H1 (cell line): ENCODE measurements at regions of chr6 and their contacts with region 1.

Region 1: DNA sequence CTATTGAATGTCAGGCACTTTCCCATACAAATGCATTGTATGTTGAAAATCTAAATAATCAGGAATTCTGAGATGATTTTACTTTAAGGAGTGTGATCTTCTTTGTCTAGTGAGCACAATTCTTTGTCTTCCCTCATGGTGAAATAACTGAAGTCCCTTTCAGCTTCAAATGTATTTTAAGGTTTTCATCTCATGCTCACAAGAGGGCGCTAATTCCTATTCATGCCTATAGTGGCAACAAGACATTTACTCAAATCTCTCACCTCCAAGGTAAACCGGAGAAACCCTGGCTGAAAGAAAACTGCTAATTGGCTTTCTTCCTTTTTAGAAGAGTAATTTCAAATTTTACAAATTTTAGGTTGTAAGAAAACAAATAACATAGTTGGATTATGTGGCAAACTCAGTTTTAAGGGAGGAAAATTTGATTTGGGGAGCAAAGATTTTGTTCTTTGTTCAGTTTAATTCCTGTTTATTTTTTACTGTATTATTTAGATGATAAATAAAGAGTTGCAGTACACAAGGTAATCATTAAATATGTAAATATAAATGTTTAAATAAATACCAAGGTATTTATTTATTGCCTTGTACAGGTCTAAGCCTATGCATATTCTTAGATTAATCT is 69.1 kb downstream of the SLC35F1 start:
- DNase-seq: no peak
- H3K4me3 ChIP-seq: no peak overlapping the region
- H3K27ac ChIP-seq: no peak overlapping the region
- H3K4me1 ChIP-seq: 0 out of 7 replicates have a peak, but pooled peaks cover 0 to 3% (median 0%) of the 10 kb centered on the region in 4 experiments
- H3K27me3 ChIP-seq: no peaks in the 10 kb centered on the region
- CTCF ChIP-seq: peak in 2 of 3 experiments; percentile 62 to 76; a peak in 3 of 4 replicates
- EP300 ChIP-seq: no peak
- POLR2A ChIP-seq: no peak
- RAD21 ChIP-seq: peak; percentile 71 to 78

Region 2: GRCh38 chr6:117840541-117840983 is 135.6 kb before region 1 on chr6:
- CTCF ChIA-PET with region 1: interaction called, 11 read pairs
- POLR2A ChIA-PET with region 1: no interaction called
- DNase-seq: no peak
- H3K4me3 ChIP-seq: no peak overlapping the region
- H3K27ac ChIP-seq: no peak overlapping the region
- H3K4me1 ChIP-seq: peaks cover 0 to 4% (median 0%) of the 10 kb centered on the region in 4 experiments; a peak in 2 of 7 replicates
- H3K27me3 ChIP-seq: no peaks in the 10 kb centered on the region; a peak in 1 of 7 replicates
- CTCF ChIP-seq: peak in 2 of 3 experiments; percentile 55 to 56; a peak in 2 of 4 replicates
- EP300 ChIP-seq: no peak
- POLR2A ChIP-seq: no peak
- RAD21 ChIP-seq: peak; percentile 81 to 82

Region 3: GRCh38 chr6:117960877-117961276 is 15.3 kb before region 1 on chr6:
- CTCF ChIA-PET with region 1: interaction called, 13 read pairs
- POLR2A ChIA-PET with region 1: interaction called, 3 read pairs
- DNase-seq: no peak
- H3K4me3 ChIP-seq: no peak overlapping the region
- H3K27ac ChIP-seq: no peak overlapping the region
- H3K4me1 ChIP-seq: no peaks in the 10 kb centered on the region
- H3K27me3 ChIP-seq: no peaks in the 10 kb centered on the region
- CTCF ChIP-seq: no peak
- EP300 ChIP-seq: no peak
- POLR2A ChIP-seq: no peak
- RAD21 ChIP-seq: no peak